ENCODE measurements at regions of chr1 and their contacts with region 1.

Region 1: DNA sequence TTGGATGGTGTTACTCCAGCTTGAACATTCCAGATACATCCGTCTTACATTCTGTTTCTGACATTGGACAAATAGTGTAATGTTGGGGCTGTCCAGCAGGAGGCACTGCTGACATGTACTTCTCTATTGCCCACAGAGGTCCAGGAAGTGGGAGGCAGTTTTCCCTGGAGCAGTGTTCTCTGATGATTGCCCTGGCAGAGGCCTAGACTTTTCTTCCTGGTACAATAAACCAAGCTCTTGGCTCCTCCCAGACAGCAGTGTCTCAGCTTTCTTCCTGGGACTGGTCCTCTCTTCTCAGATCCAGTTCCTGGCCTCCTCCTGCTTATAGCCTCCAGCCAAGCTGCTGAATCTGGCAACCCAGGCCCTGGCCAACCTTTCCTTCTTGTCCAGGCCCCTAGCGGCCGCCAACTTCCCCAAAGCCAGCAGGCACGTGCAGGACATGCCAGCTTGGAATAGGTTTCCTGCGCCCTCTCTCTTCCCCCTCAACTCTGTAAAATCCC is 14.9 kb upstream of the IFNLR1 start:
- ATAC-seq: peak; percentile 26 to 91 (median 70)
- H3K4me3 ChIP-seq: no peak overlapping the region
- H3K27ac ChIP-seq: no peak overlapping the region
- H3K4me1 ChIP-seq: peaks cover 0 to 2% of the 10 kb centered on the region in 2 donors

Region 2: GRCh38 chr1:24391882-24392603 is 190.1 kb after region 1 on chr1:
- in situ Hi-C with region 1: loop called (anchors 5 to 10 kb)
- ATAC-seq: peak; percentile 66 to 95 (median 86)
- H3K4me3 ChIP-seq: no peak overlapping the region
- H3K27ac ChIP-seq: no peak overlapping the region
- H3K4me1 ChIP-seq: no peaks in the 10 kb centered on the region

Region 3: GRCh38 chr1:24621121-24621520 is 419.1 kb after region 1 on chr1:
- in situ Hi-C with region 1: loop called in 3 of 9 experiments (anchors 10 to 25 kb)
- ATAC-seq: no peak
- H3K4me3 ChIP-seq: no peak overlapping the region
- H3K27ac ChIP-seq: no peak overlapping the region
- H3K4me1 ChIP-seq: no peaks in the 10 kb centered on the region

Region 4: GRCh38 chr1:24642481-24643361 is 440.7 kb after region 1 on chr1 and contains the start of gene SRRM1:
- in situ Hi-C with region 1: loop called in 4 of 9 experiments (anchors 10 to 25 kb)
- ATAC-seq: peak; percentile 83 to 95 (median 94)
- H3K4me3 ChIP-seq: peak within 1 kb of the TSS; percentile 55 to 83 (median 69)
- H3K27ac ChIP-seq: peak within 1 kb of the TSS; percentile 95 to 97
- H3K4me1 ChIP-seq: peaks cover 10 to 15% of the 10 kb centered on the region in 2 donors
- total RNA-seq, gene SRRM1: 36.6 to 141 (median 69.1) TPM